Adrenal gland (tissue), 19 donors: ENCODE measurements at regions of chr20 and their contacts with region 1.

Region 1: GRCh38 chr20:53077373-53078205 is 105.4 kb downstream of the TSHZ2 start:
- DNase-seq: peak; percentile 71 to 92 (median 85)
- H3K4me3 ChIP-seq: no peak overlapping the region
- H3K27ac ChIP-seq: peak overlapping the region; percentile 5 to 86 (median 45)
- H3K4me1 ChIP-seq: peaks cover 21 to 59% of the 10 kb centered on the region in 2 donors
- H3K27me3 ChIP-seq: no peaks in the 10 kb centered on the region
- CTCF ChIP-seq: peak in 1 of 6 experiments; percentile 7
- POLR2A ChIP-seq: peak in 1 of 2 donors; percentile 20

Region 2: DNA sequence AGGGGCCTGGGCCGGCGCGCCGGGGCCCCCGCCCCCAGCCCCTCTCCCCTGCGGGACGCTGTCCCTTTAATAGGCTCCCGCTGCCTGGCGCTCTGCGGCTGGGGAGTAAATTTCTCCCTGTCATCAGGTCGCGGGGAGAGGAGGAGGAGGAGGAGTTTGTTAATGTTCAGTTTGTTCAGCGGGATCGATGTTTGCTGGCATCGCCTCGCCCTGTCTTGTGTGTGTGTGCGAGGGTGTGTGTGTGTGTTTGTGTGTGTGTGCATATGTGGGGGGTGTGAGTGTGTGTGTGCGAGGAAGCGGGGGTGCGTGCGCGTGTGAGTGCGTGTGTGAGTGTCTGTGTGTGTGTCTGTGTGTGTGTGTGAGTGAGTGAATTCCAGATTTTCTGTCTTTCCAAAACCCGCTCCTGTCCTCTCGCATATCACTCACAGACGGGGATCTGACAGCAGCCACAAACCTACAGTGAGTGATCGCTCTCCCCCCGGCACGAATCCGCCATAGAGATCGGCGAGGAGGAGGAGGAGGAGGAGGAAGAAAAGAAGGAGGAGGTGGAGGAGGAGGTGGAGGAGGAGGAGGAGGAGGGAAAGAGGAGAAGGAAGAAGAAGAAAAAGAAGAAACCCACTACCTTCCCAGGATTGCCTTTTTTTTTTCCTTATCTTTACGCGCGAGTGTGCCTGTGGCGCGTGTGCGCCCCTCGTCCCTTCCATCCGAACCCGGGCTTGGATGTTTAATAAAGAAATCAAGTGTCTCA is 105.2 kb before region 1 on chr20 and contains the start of gene TSHZ2:
- intact Hi-C with region 1: loop called in 1 of 2 experiments (anchors 10 kb)
- DNase-seq: peak; percentile 71 to 92 (median 83)
- H3K4me3 ChIP-seq: peak within 1 kb of the TSS; percentile 10 to 90 (median 87)
- H3K27ac ChIP-seq: peak within 1 kb of the TSS; percentile 60 to 95 (median 87)
- H3K4me1 ChIP-seq: peaks cover 7 to 15% of the 10 kb centered on the region in 2 donors
- H3K27me3 ChIP-seq: no peaks in the 10 kb centered on the region
- CTCF ChIP-seq: no peak
- POLR2A ChIP-seq: peak in 1 of 2 donors; percentile 62
- total RNA-seq, gene TSHZ2: 20.5 to 87.1 (median 64.8) TPM